ENCODE measurements at regions of chr1 and their contacts with region 1.

Region 1: DNA sequence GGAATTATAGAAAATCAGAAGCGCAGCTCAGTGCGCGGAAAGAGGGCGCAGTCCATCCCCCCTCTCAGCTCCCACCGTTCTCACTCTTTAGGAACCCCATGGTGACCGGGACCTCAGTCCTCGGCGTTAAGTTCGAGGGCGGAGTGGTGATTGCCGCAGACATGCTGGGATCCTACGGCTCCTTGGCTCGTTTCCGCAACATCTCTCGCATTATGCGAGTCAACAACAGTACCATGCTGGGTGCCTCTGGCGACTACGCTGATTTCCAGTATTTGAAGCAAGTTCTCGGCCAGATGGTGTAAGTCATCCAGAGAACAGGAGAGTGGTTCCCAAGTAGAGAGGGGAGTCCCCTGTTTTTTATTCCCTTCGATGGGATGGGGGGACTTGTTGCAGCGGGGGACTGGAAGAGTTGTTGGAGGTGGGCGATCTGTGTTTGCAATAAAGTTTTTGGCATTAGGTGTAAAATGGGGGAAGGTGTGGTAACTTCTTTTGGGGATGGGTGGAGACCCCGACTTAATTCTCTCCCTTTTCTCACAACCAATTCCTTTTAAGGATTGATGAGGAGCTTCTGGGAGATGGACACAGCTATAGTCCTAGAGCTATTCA is 620 bp downstream of the PSMB4 start:
- H3K4me3 ChIP-seq: peak overlapping the region; percentile 91
- H3K27ac ChIP-seq: peak overlapping the region; percentile 71
- H3K4me1 ChIP-seq: no peaks in the 10 kb centered on the region
- CTCF ChIP-seq: no peak

Region 2: DNA sequence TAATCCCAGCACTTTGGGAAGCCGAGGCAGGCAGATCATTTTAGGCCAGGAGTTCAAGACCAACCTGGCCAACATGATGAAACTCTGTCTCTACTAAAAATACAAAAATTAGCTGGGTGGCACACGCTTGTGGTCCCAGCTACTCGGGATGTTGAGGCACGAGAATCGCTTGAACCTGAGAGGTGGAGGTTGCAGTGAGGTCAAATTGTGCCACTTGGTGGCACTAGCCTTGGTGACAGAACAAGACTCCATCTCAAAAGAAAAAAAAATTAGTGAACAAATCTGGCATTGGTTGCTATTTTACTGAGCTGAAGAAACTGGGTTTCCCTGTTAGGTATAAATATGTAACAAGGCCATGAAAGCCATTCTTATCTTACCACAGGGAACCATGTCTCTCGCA is 172.4 kb before region 1 on chr1:
- CTCF ChIA-PET with region 1: no interaction called
- POLR2A ChIA-PET with region 1: no interaction called
- H3K4me3 ChIP-seq: no peak overlapping the region
- H3K27ac ChIP-seq: no peak overlapping the region
- H3K4me1 ChIP-seq: no peaks in the 10 kb centered on the region
- CTCF ChIP-seq: no peak

Region 3: GRCh38 chr1:151372061-151372934 is 27.7 kb before region 1 on chr1 and contains the start of gene SELENBP1:
- CTCF ChIA-PET with region 1: interaction called, 4 read pairs
- POLR2A ChIA-PET with region 1: interaction called, 13 read pairs
- H3K4me3 ChIP-seq: no peak within 1 kb of the TSS
- H3K27ac ChIP-seq: peak within 1 kb of the TSS; percentile 64
- H3K4me1 ChIP-seq: peaks cover 12% of the 10 kb centered on the region
- CTCF ChIP-seq: no peak; the same call in 1 of the 2 replicates

Region 4: GRCh38 chr1:151728151-151729054 is 328.4 kb after region 1 on chr1:
- CTCF ChIA-PET with region 1: no interaction called
- POLR2A ChIA-PET with region 1: no interaction called
- H3K4me3 ChIP-seq: no peak overlapping the region
- H3K27ac ChIP-seq: no peak overlapping the region
- H3K4me1 ChIP-seq: no peaks in the 10 kb centered on the region
- CTCF ChIP-seq: no peak